ENCODE measurements at regions of chr1 and their contacts with region 1.

Region 1: DNA sequence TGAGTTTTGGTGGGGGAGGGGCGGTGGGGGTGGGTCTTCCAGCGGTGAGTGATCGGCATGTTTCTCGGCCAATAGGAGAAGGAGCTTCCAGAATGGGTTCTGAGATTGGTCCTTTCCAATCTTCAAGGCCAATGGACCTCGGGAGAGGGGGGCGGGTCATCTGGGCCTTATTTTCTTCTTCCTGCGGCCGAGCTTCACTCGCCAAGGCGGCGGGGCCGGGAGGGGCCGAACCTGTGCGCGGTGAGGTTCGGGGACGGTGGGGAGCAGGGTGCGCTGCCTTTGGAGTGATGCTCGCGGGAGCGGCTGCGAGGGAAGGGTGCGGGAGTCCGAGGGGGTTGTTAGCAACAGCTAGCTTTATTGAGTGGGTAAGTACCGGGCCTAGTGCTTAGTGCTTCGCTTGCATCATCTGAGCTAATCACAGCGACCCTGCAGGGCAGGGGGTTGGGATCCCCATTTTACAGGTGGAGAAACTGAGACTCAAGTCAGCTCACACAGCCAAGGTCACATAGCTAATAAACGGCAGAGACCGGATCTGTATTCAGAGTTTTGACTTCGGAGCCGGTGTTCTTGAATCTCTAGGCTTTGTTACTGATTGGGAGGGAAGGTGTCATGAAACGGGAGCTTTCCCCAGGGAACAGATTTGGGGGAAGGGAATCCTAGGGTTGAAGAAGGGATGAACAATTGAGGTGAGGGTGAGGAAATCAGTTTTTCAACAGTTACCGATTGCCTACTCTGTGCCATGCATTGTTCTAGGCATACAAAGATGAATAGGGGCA is 549 bp downstream of the KDM4A start:
- DNase-seq: peak; percentile 88 to 99 (median 95)

Region 2: GRCh38 chr1:43239484-43239883 is 411.0 kb before region 1 on chr1:
- intact Hi-C with region 1: no loop called
- DNase-seq: no peak

Region 3: DNA sequence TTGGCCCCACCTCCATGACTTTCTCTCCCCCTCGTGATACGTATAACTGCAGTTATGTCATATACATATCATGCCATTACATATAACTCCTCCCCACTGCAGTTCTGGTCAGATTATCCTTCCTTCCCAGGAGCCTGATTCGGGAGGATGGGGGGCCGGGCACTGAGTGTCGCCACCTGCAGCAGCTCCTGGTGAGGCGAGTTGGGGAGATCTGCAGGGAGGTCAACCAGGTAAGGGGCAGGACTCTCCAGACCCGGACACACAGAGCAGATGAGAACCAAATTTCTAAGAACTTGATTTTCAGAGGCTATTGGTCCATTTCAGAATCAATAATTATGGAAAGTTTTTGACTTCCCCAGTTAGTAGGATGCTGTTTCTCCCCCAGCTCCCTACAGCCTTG is 216.2 kb before region 1 on chr1:
- intact Hi-C with region 1: no loop called
- DNase-seq: peak in 5 of 42 donors; percentile 1 to 22 (median 4)

Region 4: GRCh38 chr1:43541734-43542401 is 108.6 kb before region 1 on chr1:
- intact Hi-C with region 1: loop called (anchors 5 kb)
- DNase-seq: peak; percentile 78 to 97 (median 92)

Region 5: GRCh38 chr1:43634721-43635120 is 15.8 kb before region 1 on chr1:
- intact Hi-C with region 1: no loop called
- DNase-seq: no peak

Region 6: DNA sequence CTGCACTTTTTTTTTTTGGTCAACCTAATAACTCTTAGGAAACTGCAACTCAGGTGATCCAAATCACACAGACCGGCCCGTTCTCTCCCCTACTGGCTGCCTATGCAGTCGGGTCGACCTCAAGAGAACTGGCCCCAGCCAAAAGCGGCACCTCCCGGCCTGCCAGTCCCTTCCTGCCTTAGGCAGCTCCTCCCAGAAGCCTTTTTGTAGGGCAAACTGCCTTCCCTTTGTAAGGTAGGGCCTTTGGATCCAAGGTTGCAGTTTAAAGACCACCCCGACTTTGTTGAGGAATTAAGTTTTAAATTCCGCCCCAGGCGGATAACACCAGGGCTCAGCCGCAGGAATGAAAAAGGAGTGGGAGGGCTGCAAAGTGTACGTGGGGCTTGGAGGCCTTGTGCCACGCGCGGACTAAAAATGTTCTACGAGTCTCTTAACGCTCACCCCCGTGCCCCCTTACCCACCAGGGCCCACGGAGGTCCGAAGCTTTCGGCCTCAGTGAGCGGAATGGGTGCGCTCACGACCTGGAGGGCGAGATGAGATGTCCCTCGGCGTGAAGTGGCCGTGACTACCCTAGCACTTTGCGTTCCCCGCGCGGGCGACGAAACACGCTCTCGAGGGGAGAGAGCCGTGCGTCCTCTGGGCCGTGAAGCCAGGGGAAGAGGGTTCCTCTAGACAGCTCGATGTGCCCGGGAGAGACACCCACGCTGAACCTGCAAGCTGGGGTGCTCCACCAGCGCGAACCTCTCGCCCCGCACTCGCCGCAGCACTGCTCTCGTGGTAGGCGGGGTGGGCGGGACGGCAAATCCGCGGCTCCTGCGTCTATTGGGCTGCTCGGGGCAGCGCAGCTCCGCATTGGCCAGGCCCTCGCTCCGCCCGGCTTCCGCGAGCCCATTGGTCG is 56.3 kb after region 1 on chr1:
- intact Hi-C with region 1: loop called (anchors 2 kb)
- DNase-seq: peak; percentile 86 to 98 (median 95)